WTC11 (cell line): ENCODE measurements at regions of chr11 and their contacts with region 1.

Region 1: GRCh38 chr11:113540416-113541330 is 65.5 kb upstream of the DRD2 start:
- DNase-seq: peak; percentile 57
- ATAC-seq: peak; percentile 96
- H3K4me3 Mint-ChIP-seq: no peak overlapping the region
- H3K27ac Mint-ChIP-seq: no peak overlapping the region
- H3K4me1 Mint-ChIP-seq: peaks cover 30% of the 10 kb centered on the region
- H3K27me3 Mint-ChIP-seq: peaks cover 23% of the 10 kb centered on the region
- CTCF ChIP-seq: no peak

Region 2: GRCh38 chr11:113553235-113553634 is 12.6 kb after region 1 on chr11:
- CTCF ChIA-PET with region 1: interaction called, 40 read pairs
- POLR2A ChIA-PET with region 1: no interaction called
- DNase-seq: peak; percentile 35
- ATAC-seq: peak; percentile 76
- H3K4me3 Mint-ChIP-seq: no peak overlapping the region
- H3K27ac Mint-ChIP-seq: peak overlapping the region; percentile 15; the same call in 1 of the 2 replicates
- H3K4me1 Mint-ChIP-seq: peaks cover 46% of the 10 kb centered on the region
- H3K27me3 Mint-ChIP-seq: no peaks in the 10 kb centered on the region; the same call in 1 of the 2 replicates
- CTCF ChIP-seq: no peak

Region 3: DNA sequence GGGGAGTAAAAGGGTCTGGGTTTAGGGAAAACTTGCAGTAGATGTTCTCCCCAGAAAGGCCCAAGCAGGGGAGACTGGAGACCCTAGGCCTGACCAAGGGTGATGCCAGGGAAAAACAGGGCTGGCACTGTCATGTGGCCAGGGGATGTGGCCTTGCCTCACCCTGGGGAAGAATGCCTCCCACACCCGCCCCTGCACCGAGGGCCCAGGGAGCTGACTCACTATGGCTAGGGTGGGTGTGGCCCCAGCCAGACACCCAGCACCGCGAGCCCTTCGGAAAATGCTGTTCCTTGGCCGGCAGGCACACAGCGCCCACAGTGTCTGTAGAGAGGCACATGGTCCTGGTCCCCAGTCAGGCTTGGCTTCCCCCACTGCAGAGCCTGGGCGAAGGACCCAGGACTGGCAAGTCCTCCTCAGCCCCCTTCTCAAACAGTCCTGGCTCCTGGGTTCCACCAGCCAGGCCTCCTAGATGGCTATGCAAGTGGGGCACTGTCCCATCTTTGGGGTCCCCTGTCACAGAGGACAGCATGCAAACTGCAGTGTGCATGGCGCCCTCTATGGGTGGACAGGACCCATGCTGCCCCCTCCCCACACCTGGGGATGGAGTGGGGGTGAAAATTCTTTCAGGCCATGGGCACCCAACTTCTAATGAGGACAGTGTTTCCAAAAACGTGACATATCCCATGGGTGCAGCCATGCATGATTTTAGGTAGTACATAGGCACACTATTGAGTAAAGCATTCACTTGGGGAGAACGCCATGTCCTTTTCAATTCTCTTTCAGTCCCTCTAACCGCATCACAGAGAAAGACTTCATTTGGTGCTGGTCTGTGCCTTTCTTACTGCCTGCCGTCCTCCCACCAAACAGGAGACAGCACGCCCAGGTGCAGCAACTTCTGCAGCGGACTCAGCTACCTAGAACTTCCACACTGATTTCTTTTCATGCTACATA is 150.2 kb after region 1 on chr11:
- CTCF ChIA-PET with region 1: interaction called, 10 read pairs
- POLR2A ChIA-PET with region 1: no interaction called
- DNase-seq: peak; percentile 81
- ATAC-seq: peak; percentile 89
- H3K4me3 Mint-ChIP-seq: no peak overlapping the region
- H3K27ac Mint-ChIP-seq: no peak overlapping the region
- H3K4me1 Mint-ChIP-seq: no peaks in the 10 kb centered on the region
- H3K27me3 Mint-ChIP-seq: no peaks in the 10 kb centered on the region
- CTCF ChIP-seq: peak; percentile 95

Region 4: GRCh38 chr11:113730887-113731726 is 190.4 kb after region 1 on chr11:
- CTCF ChIA-PET with region 1: interaction called, 26 read pairs
- POLR2A ChIA-PET with region 1: no interaction called
- DNase-seq: peak; percentile 43
- ATAC-seq: peak; percentile 87
- H3K4me3 Mint-ChIP-seq: no peak overlapping the region
- H3K27ac Mint-ChIP-seq: no peak overlapping the region
- H3K4me1 Mint-ChIP-seq: no peaks in the 10 kb centered on the region
- H3K27me3 Mint-ChIP-seq: no peaks in the 10 kb centered on the region
- CTCF ChIP-seq: no peak